Endothelial cell of umbilical vein (primary cell): ENCODE measurements at regions of chr11 and their contacts with region 1.

Region 1: DNA sequence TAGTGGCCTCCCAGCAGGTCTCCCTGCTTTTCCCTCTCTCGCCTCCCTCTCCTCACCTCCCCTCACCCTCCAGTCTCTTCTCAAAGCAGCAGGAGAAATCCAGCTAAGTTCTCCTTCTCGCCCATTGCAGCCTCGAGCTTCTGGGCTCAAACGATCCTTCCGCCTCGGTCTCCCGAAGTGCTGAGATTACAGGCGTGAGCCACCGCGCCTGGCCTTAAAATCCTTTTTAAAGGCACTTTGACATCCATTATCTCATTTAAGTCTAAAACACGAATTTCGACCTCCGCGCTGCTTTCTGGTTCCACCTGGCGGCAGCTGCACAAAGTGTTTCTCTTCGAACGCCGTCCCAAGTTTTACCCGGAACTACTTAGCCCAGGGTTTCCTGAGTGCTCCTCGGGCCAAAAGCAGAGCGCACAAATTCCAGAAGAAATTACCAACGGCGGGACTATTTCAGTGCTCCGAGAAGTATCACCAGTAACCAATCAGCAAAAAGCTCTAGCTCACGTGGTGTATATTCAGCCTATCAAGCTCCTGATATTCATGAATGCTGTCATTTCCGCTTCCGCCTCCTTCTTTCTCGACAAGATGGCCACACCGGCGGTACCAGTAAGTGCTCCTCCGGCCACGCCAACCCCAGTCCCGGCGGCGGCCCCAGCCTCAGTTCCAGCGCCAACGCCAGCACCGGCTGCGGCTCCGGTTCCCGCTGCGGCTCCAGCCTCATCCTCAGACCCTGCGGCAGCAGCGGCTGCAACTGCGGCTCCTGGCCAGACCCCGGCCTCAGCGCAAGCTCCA is at the start of gene EIF3F:
- DNase-seq: peak; percentile 100
- H3K4me3 ChIP-seq: peak within 1 kb of the TSS; percentile 71 to 99 (median 98)
- H3K27ac ChIP-seq: peak within 1 kb of the TSS; percentile 67
- H3K4me1 ChIP-seq: peaks cover 41% of the 10 kb centered on the region
- H3K27me3 ChIP-seq: no peaks in the 10 kb centered on the region
- CTCF ChIP-seq: peak; percentile 77 to 84
- POLR2A ChIP-seq: peak; percentile 53
- total RNA-seq, gene EIF3F: 385 and 436 TPM in 2 replicates

Region 2: DNA sequence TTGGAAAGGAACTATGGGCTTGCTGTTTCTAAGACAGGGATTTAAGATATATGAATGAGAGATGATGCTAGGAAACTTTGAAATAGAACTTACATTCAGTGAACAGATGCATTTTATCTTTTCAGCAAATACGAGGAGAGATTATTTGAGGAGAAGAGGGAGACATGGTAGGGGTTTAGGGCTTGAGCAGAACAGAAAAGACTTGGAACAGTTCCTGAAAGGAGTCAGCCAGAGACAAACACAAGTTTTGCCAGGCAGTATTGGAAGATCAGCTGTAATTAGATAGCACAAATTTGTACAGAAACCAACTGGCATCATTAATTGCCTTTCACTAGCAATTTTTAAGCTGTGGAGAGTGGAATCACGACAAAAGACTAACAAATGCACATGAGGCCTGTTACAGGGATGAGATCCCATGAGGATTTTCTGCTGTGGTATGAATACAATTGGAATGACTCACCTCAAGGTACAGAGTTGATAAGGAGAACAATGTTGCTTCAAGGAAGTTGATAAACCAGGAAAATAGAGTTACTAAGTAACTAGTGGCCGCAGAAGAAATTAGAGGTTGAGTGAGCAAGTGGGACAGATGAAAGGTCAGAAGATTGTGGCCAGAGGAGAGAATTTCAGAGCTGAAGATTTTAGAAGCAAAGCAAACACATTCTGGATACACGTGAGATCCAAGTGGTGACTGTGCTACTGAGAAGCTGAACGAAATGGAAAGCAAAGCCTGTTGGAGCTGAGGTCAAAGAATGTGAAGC is 381.6 kb before region 1 on chr11:
- CTCF ChIA-PET with region 1: interaction called, 3 read pairs
- POLR2A ChIA-PET with region 1: no interaction called
- dilution Hi-C with region 1: no loop called
- intact Hi-C with region 1: loop called (anchors 5 kb)
- DNase-seq: peak; percentile 98
- H3K4me3 ChIP-seq: peak overlapping the region in 1 of 3 experiments; percentile 1
- H3K27ac ChIP-seq: peak overlapping the region; percentile 85
- H3K4me1 ChIP-seq: peaks cover 35% of the 10 kb centered on the region
- H3K27me3 ChIP-seq: no peaks in the 10 kb centered on the region
- CTCF ChIP-seq: no peak
- POLR2A ChIP-seq: peak; percentile 78

Region 3: DNA sequence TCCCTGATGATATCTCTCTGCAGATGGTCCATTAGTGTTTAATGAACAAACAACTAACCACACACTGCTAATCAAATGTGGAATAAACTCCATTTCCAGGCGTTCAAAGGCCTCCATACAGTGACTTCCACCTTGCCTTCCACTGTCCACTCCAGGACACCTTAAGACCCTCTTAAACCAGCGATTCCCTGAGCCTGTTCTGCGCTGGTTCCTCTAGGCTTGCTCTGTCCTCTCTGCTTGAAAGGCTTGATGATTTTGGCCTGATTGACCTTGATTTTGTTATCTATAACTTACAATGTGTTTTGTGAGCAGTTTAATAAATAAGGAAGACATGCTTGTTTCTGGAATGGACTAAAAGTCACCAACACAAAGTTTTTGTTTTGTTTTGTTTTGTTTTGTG is 292.7 kb before region 1 on chr11:
- CTCF ChIA-PET with region 1: interaction called, 7 read pairs
- POLR2A ChIA-PET with region 1: no interaction called
- dilution Hi-C with region 1: no loop called
- intact Hi-C with region 1: loop called (anchors 1 kb)
- DNase-seq: no peak
- H3K4me3 ChIP-seq: no peak overlapping the region
- H3K27ac ChIP-seq: no peak overlapping the region
- H3K4me1 ChIP-seq: no peaks in the 10 kb centered on the region
- H3K27me3 ChIP-seq: peaks cover 37 to 40% of the 10 kb centered on the region in 2 experiments
- CTCF ChIP-seq: no peak
- POLR2A ChIP-seq: no peak

Region 4: DNA sequence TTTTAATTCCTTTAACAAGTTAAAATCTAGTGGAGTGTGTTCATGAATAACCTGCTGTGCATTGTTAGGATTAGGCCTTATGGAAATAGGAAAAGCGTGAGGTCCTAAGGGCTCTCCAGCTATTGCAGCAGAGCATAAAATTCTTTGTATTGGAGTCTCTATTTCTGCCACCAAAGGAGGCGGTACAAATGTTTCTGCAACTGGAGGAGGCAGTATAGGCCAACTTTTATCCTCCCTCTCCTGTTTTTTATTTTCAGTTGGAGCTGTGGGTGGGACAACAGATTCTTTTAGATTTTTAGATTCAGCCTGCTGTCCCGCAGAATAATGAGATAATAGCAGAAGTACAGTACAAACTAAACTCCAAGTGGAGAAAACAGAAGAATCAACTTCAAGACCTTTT is 82.0 kb before region 1 on chr11:
- CTCF ChIA-PET with region 1: interaction called, 109 read pairs
- POLR2A ChIA-PET with region 1: no interaction called
- dilution Hi-C with region 1: no loop called
- intact Hi-C with region 1: loop called (anchors 1 kb)
- DNase-seq: peak; percentile 38
- H3K4me3 ChIP-seq: no peak overlapping the region
- H3K27ac ChIP-seq: no peak overlapping the region
- H3K4me1 ChIP-seq: no peaks in the 10 kb centered on the region
- H3K27me3 ChIP-seq: peaks cover 2 to 8% of the 10 kb centered on the region in 2 experiments
- CTCF ChIP-seq: peak in 1 of 2 donors; percentile 11
- POLR2A ChIP-seq: no peak

Region 5: DNA sequence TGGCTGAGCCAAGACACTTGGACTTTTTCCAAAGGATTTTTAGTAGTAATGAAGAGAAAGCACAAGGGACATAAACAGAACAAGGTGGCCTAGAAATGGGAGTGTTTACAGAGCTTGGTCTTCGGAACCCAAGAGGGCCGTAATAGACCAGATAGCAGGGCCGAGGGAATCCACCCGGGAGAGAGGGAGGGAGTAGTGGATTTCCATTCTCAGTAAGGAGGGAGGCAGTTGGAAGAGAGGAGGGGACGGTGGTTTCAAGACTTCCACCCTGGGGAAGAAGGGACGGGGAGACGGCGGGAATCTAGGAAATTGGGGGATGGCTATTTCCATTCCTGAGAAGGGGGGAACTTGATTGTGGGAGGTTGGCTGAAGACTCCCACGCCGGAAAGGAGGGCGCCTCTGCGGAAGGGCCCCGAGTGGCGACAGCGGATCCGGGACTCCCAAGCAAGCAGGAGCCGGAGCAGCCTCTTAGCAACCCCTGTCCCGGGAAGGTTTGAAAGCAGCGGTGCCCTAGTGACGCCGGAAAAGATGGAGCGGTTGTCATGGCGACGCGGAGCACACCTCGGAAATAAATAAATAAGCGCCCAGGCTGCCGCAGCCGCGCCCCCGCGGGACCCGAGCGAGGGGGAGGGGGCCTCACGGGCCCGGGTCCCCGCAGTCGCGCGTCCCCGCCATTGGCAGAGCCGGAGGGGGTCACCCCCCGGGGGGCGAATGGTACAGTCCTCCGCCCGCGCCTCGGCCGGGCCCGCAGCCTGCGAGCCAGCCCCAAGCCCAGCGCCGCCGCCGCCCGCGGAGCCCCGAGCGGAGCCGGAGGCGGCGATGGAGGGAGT is 31.7 kb after region 1 on chr11:
- CTCF ChIA-PET with region 1: interaction called, 10 read pairs
- POLR2A ChIA-PET with region 1: no interaction called
- dilution Hi-C with region 1: no loop called
- intact Hi-C with region 1: no loop called
- DNase-seq: peak; percentile 30
- H3K4me3 ChIP-seq: peak overlapping the region; percentile 25 to 39 (median 36)
- H3K27ac ChIP-seq: no peak overlapping the region
- H3K4me1 ChIP-seq: peaks cover 5% of the 10 kb centered on the region
- H3K27me3 ChIP-seq: peaks cover 37 to 43% of the 10 kb centered on the region in 2 experiments
- CTCF ChIP-seq: no peak
- POLR2A ChIP-seq: no peak